ENCODE measurements at regions of chr12 and their contacts with region 1.

Region 1: GRCh38 chr12:100266835-100267618 is at the starts of genes DEPDC4 and SCYL2:
- DNase-seq: peak; percentile 95 to 97 (median 96)
- ATAC-seq: peak; percentile 97 to 98 (median 98)
- H3K4me3 ChIP-seq: peak within 1 kb of the TSS; percentile 74 to 99 (median 92)
- H3K27ac ChIP-seq: peak within 1 kb of the TSS; percentile 89 to 99 (median 97)
- H3K4me1 ChIP-seq: peaks cover 15 to 46% (median 27%) of the 10 kb centered on the region in 12 donors
- H3K27me3 ChIP-seq: no peaks in the 10 kb centered on the region
- CTCF ChIP-seq: peak in 4 of 12 donors; percentile 14 to 36 (median 22)
- POLR2A ChIP-seq: peak in 1 of 2 donors; percentile 59
- total RNA-seq, gene DEPDC4: 0.33 to 1.3 (median 0.58) TPM in 7 of 9 donors, not detected in the others
- total RNA-seq, gene SCYL2: 23.7 to 41.3 (median 33.8) TPM

Region 2: GRCh38 chr12:100142851-100143559 is 124.0 kb before region 1 on chr12 and contains the start of gene BLTP3B:
- intact Hi-C with region 1: loop called in 1 of 10 experiments (anchors 2 kb)
- DNase-seq: peak; percentile 93 to 96 (median 94)
- ATAC-seq: peak; percentile 94 to 99 (median 98)
- H3K4me3 ChIP-seq: peak within 1 kb of the TSS; percentile 68 to 100 (median 93)
- H3K27ac ChIP-seq: peak within 1 kb of the TSS; percentile 61 to 98 (median 94)
- H3K4me1 ChIP-seq: peaks cover 0 to 43% (median 21%) of the 10 kb centered on the region in 12 donors
- H3K27me3 ChIP-seq: no peaks in the 10 kb centered on the region
- CTCF ChIP-seq: no peak
- POLR2A ChIP-seq: no peak
- total RNA-seq, gene BLTP3B: 14.0 to 22.4 (median 16.2) TPM

Region 3: GRCh38 chr12:100200463-100201181 is 66.4 kb before region 1 on chr12 and contains the start of gene ACTR6:
- intact Hi-C with region 1: loop called in 4 of 10 experiments (anchors 2 to 5 kb)
- DNase-seq: peak; percentile 94 to 96 (median 95)
- ATAC-seq: peak; percentile 98 to 99 (median 99)
- H3K4me3 ChIP-seq: peak within 1 kb of the TSS; percentile 54 to 94 (median 66)
- H3K27ac ChIP-seq: peak within 1 kb of the TSS in 11 of 12 donors; percentile 14 to 87 (median 65)
- H3K4me1 ChIP-seq: peaks cover 0 to 27% (median 14%) of the 10 kb centered on the region in 12 donors
- H3K27me3 ChIP-seq: no peaks in the 10 kb centered on the region
- CTCF ChIP-seq: peak in 1 of 12 donors; percentile 10
- POLR2A ChIP-seq: no peak
- total RNA-seq, gene ACTR6: 8.9 to 29.5 (median 21.9) TPM

Region 4: DNA sequence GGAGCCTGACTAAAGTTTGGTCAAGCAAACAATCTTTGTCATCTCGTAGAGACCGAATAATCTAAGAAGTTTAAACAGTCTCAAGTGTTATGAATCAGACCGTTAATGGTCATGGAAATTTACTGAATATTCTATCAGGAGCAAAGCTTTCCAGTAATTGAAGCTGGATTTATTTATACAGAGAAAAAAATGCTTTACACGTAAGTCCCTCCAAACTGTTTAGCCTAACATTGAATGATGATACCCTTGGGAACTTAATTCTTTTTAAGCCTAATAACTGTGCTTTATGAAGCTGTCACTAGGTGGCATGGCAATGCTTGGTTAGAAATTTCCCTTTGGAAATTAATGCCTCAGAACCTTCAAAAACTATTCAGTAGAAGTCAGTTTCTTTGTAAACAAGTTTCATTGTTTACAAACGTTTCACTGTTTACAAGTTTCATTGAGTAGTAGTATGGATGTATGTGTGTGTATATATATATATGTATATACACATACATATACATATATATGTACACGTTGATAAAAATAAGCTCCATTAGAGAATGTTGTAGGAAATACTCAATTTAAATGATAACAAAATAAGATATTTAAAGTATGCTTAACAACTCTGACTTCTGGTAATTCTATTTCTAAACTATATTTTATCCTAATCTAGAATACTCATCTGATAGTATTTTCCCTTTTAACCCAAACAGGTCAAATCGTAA is 32.3 kb before region 1 on chr12:
- intact Hi-C with region 1: loop called in 1 of 10 experiments (anchors 2 kb)
- DNase-seq: no peak
- ATAC-seq: peak in 2 of 4 donors; percentile 48 to 76
- H3K4me3 ChIP-seq: peak overlapping the region in 1 of 12 donors; percentile 13
- H3K27ac ChIP-seq: peak overlapping the region in 4 of 12 donors; percentile 0 to 28 (median 15)
- H3K4me1 ChIP-seq: peaks cover 0 to 7% (median 0%) of the 10 kb centered on the region in 12 donors
- H3K27me3 ChIP-seq: no peaks in the 10 kb centered on the region
- CTCF ChIP-seq: peak; percentile 53 to 84 (median 72)
- POLR2A ChIP-seq: no peak

Region 5: GRCh38 chr12:100311317-100311716 is 44.3 kb after region 1 on chr12:
- intact Hi-C with region 1: loop called in 1 of 10 experiments (anchors 5 kb)
- DNase-seq: no peak
- ATAC-seq: no peak
- H3K4me3 ChIP-seq: no peak overlapping the region
- H3K27ac ChIP-seq: peak overlapping the region in 4 of 12 donors; percentile 7 to 33 (median 22)
- H3K4me1 ChIP-seq: peaks cover 0 to 8% (median 0%) of the 10 kb centered on the region in 12 donors
- H3K27me3 ChIP-seq: no peaks in the 10 kb centered on the region
- CTCF ChIP-seq: no peak
- POLR2A ChIP-seq: no peak

Region 6: GRCh38 chr12:100324498-100324897 is 57.5 kb after region 1 on chr12:
- intact Hi-C with region 1: loop called in 1 of 10 experiments (anchors 2 kb)
- DNase-seq: no peak
- ATAC-seq: no peak
- H3K4me3 ChIP-seq: no peak overlapping the region
- H3K27ac ChIP-seq: no peak overlapping the region
- H3K4me1 ChIP-seq: no peaks in the 10 kb centered on the region
- H3K27me3 ChIP-seq: no peaks in the 10 kb centered on the region
- CTCF ChIP-seq: no peak
- POLR2A ChIP-seq: no peak

Region 7: GRCh38 chr12:100554608-100555077 is 287.6 kb after region 1 on chr12:
- intact Hi-C with region 1: loop called in 1 of 10 experiments (anchors 5 kb)
- DNase-seq: peak in 2 of 5 donors; percentile 37 to 43
- ATAC-seq: peak; percentile 50 to 86 (median 70)
- H3K4me3 ChIP-seq: no peak overlapping the region
- H3K27ac ChIP-seq: peak overlapping the region in 2 of 12 donors; percentile 9 to 24
- H3K4me1 ChIP-seq: peaks cover 0 to 10% (median 5%) of the 10 kb centered on the region in 12 donors
- H3K27me3 ChIP-seq: no peaks in the 10 kb centered on the region
- CTCF ChIP-seq: peak; percentile 67 to 90 (median 78)
- POLR2A ChIP-seq: no peak

Measured in heart left ventricle (tissue), 16 donors.